GM13977 (cell line): ENCODE measurements at regions of chr16 and their contacts with region 1.

Region 1: DNA sequence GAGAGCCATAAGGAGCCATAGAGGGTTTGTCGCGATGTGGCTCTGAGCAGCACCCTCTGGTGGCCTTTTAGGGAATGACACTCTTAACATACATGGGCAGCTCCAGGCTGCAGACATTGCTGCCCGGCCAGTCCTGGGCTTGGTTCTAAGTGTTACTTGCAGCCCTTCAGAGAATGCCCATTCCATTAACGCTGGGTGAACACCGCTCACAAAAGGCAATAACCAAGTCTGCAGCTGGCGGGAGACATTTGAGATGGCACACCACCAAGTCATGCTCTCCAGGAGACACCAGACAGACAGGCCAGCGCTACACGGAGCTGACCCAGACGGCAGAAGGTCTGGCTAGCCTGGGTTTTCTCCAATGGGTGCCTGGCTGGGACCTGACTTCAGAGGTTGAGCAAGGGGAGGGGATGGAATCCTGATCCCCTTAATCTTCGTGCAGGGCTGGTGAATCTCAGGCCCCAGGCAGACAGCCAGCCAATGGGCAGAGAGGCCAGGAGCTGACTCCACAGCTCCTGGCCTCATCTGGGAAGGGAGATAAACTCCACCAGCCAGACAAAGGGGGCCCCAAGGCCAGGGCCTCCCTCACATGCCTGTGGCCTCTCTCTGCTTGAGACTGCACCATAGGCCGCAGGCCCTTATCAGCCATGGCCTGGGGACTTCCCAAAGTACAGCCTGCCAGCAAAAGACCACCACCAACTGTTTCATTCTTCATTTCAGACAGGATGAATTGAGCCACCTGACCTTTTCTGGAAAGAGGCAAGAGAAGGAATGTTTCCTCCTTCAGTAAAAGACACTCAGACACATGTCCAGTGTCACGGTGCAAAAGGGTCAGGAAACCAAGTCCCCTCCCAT is 58.8 kb downstream of the ZDHHC7 start:
- DNase-seq: peak; percentile 83
- CTCF ChIP-seq: peak; percentile 86

Region 2: DNA sequence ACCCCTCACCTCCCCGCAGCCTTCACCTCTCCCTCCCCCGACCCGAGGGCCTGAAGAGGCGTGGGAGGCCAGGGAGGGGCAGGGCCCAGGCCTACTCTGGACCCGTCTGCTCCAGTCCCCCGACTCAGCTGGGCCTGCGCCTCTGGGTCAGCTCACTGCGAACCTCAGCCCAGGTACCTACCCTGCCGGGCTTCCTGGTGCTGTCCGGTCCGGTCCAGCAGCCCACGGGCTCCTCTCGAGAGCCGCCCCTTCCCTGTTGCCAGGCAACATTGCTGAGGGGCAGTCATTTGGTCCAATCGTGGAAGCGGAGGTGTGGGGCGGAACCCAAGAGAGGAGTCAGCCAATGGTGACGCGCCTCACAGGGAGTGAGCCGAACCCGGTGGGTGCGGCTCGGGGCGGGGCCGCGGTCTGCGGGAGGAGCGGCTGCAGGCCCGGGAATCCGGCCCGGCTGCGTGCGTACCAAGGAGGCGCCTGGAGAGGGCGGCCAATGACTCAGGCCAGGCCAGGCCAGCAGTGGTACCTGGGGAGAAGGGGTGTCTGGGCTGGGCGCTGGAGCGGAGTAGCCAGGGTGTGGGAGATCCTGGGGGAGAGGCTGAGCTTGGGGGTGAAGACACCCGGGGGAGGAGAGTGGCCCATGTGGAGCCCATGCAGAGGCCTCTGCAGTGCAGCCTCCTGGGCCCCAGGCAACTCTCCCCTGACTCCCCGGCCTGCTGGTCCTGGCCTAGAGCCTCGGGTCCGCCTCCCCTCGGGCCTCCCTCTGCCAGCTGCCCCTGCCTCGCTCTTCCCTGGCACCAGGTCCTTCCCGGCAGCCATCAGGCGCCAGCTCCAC is 447.9 kb before region 1 on chr16 and contains the start of gene MEAK7:
- in situ Hi-C with region 1: loop called (anchors 25 kb)
- DNase-seq: peak; percentile 97
- CTCF ChIP-seq: peak; percentile 12

Region 3: GRCh38 chr16:84647828-84648594 is 304.6 kb before region 1 on chr16 and contains the start of gene KLHL36:
- in situ Hi-C with region 1: loop called (anchors 25 kb)
- DNase-seq: peak; percentile 98
- CTCF ChIP-seq: no peak